ENCODE measurements at regions of chr16 and their contacts with region 1.

Region 1: DNA sequence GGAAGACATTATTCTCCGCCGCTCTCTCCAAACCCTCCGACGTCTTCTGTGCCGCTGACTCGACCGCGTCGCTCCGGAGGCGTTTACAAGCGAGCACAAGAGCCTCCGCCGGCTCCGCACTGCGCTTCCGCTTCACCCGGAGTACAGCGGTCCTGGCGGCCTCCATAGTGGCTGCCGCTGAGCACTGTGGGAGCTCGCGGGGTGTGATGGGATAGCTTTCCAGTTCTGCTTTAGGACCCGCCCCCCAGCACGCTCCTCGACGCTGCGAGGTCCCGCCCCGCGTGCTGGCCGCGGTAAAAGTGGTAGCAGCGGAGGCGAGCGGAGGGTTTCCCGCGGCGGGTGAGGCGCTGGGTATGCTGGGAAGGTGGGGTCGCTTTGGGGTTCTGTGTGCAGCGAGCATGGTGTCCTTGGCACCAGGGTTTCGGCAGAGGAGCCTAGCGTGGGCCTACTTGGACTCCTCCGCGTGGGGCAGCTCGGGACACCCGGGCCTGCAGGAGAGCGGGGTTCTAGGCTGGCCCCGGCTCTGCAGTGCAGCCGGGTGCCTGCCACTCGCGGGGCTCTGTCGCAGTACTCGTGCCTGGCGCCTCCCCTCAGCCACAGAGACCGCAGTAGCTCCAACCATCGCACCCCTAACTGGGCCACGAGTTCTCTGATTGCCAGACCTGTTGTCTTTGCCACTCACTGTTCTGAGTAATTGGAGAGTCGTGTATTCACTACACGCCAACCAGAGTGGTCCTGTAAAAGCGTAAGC is at the starts of genes PRMT7 and SLC7A6OS:
- DNase-seq: peak; percentile 84 to 88
- ATAC-seq: peak; percentile 92 to 95
- H3K4me3 ChIP-seq: peak within 1 kb of the TSS; percentile 71 to 98 (median 82)
- H3K27ac ChIP-seq: peak within 1 kb of the TSS; percentile 87 to 91 (median 90)
- H3K4me1 ChIP-seq: peaks cover 28 to 41% of the 10 kb centered on the region in 2 donors
- H3K27me3 ChIP-seq: no peaks in the 10 kb centered on the region
- CTCF ChIP-seq: peak in 4 of 5 experiments; percentile 25 to 62 (median 44)
- POLR2A ChIP-seq: peak; percentile 87 to 88
- total RNA-seq, gene PRMT7: 22.2 to 41.0 (median 32.8) TPM
- total RNA-seq, gene SLC7A6OS: 5.0 to 8.8 (median 7.3) TPM

Region 2: GRCh38 chr16:68244903-68245853 is 65.8 kb before region 1 on chr16 and contains the start of gene PLA2G15:
- in situ Hi-C with region 1: no loop called
- intact Hi-C with region 1: loop called (anchors 5 kb)
- DNase-seq: peak; percentile 96 to 97
- ATAC-seq: peak; percentile 58 to 63
- H3K4me3 ChIP-seq: peak within 1 kb of the TSS; percentile 68 to 97 (median 92)
- H3K27ac ChIP-seq: peak within 1 kb of the TSS; percentile 95 to 100 (median 99)
- H3K4me1 ChIP-seq: peaks cover 42 to 52% of the 10 kb centered on the region in 2 donors
- H3K27me3 ChIP-seq: no peaks in the 10 kb centered on the region
- CTCF ChIP-seq: no peak
- POLR2A ChIP-seq: peak; percentile 98 to 99
- total RNA-seq, gene PLA2G15: 67.8 to 91.3 (median 84.8) TPM

Region 3: DNA sequence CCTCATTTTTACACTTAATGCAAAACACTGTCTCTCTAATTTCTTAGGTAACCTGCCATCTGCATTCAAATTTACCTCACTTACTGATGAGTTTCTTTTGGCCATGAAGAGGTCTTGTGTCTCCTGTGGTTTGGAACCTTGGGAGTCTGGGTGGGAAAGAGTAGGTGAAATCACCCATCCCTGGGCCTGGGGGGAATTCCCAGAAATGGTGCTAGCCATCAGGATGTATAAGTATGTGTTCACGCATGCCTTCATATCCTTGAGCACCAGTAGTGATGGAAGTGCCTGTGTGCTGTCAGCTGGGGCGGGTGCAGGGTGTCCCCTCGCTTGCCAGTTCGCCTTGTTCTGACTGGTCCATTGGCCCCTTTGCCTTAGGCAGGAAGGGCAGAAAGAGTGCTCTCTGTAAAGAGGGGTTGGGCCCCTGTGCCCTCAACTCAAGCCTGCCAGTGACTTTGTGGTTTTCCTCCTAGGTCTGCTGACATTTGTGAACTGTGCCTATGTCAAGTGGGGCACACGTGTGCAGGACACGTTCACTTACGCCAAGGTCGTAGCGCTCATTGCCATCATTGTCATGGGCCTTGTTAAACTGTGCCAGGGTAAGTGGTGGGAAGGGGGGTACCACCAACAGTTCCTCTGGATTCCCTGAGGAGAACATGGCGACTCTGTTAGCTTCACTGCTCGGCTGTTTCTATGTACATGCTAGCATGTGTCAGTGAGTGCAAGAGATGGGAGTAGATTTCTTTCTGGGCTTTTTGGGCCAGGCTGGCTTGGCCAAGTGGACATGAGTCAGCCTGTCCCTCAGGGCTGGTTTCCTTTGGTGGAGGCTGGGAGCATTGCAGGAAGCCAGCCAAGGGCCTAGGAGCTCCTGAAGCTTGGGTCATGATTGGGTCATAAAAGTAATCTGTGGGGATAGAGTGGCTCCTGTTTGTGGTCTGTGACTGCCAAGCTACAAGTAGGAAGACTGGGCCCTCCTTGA is 23.4 kb before region 1 on chr16:
- in situ Hi-C with region 1: no loop called
- intact Hi-C with region 1: loop called (anchors 1 kb)
- DNase-seq: peak; percentile 96 to 99
- ATAC-seq: peak; percentile 73 to 77
- H3K4me3 ChIP-seq: no peak overlapping the region
- H3K27ac ChIP-seq: peak overlapping the region; percentile 86 to 99 (median 95)
- H3K4me1 ChIP-seq: peaks cover 80 to 83% of the 10 kb centered on the region in 2 donors
- H3K27me3 ChIP-seq: no peaks in the 10 kb centered on the region
- CTCF ChIP-seq: peak in 4 of 5 experiments; percentile 20 to 50 (median 36)
- POLR2A ChIP-seq: peak; percentile 48 to 60

Measured in gastrocnemius medialis (tissue), 4 donors.